ENCODE measurements at regions of chr15 and their contacts with region 1.

Region 1: DNA sequence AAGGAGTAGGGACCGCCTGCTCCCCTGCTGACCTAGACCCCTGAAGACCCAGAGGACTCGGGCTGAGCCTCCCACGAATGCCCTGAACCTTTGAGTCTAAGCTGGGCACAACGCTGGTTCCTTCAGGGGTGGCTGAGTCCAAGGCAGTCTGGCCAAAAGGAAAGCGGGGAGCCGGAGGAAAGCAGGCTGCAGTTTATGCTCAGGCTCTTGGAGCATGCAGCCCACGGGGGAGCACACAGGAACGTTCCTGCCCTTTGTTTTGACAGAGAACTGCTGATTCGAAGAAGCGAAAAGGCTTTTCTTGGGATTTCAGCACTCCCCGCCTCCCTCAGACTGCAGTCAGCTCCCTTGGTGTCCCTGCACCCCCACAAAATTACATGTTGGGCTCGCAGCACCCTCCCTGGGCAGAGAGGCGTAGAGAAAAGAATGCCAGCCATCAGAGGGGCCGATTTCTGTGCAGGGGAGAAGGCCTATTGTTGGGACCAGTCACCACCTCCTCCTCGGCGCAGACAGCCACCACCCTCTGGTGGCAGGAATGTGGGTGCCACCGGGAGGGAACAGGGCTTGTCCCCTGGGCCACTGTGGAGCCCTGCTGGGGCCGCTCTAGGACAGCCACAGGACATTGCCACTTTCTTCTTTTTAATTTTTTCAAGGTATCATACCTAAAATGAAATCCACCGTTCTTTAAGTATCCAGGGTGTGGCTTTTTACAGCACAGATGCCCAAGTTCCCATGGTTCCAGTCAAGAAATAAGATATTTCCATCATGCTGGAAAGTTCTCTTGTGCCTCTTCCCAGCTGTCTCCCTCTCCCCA is 72.2 kb downstream of the SMAD6 start:
- DNase-seq: peak; percentile 24 to 66 (median 38)
- ATAC-seq: peak; percentile 59
- H3K4me3 ChIP-seq: no peak overlapping the region
- H3K4me3 Mint-ChIP-seq: no peak overlapping the region
- H3K27ac ChIP-seq: no peak overlapping the region
- H3K27ac Mint-ChIP-seq: no peak overlapping the region
- H3K4me1 ChIP-seq: no peaks in the 10 kb centered on the region
- H3K4me1 Mint-ChIP-seq: no peaks in the 10 kb centered on the region
- H3K27me3 ChIP-seq: no peaks in the 10 kb centered on the region
- H3K27me3 Mint-ChIP-seq: no peaks in the 10 kb centered on the region
- CTCF ChIP-seq: peak; percentile 66

Region 2: GRCh38 chr15:66603301-66604179 is 170.7 kb before region 1 on chr15:
- CTCF ChIA-PET with region 1: no interaction called
- POLR2A ChIA-PET with region 1: no interaction called
- intact Hi-C with region 1: loop called in 1 of 2 experiments (anchors 1 kb)
- DNase-seq: peak; percentile 36 to 80 (median 53)
- ATAC-seq: peak; percentile 57
- H3K4me3 ChIP-seq: no peak overlapping the region
- H3K4me3 Mint-ChIP-seq: no peak overlapping the region
- H3K27ac ChIP-seq: no peak overlapping the region
- H3K27ac Mint-ChIP-seq: no peak overlapping the region
- H3K4me1 ChIP-seq: no peaks in the 10 kb centered on the region
- H3K4me1 Mint-ChIP-seq: peaks cover under 1% of the 10 kb centered on the region
- H3K27me3 ChIP-seq: no peaks in the 10 kb centered on the region
- H3K27me3 Mint-ChIP-seq: peaks cover 6% of the 10 kb centered on the region
- CTCF ChIP-seq: peak; percentile 86

Region 3: GRCh38 chr15:66619151-66619903 is 154.9 kb before region 1 on chr15:
- CTCF ChIA-PET with region 1: interaction called, 8 read pairs
- POLR2A ChIA-PET with region 1: no interaction called
- intact Hi-C with region 1: loop called (anchors 1 kb)
- DNase-seq: peak in 13 of 14 experiments; percentile 7 to 63 (median 24)
- ATAC-seq: peak; percentile 44
- H3K4me3 ChIP-seq: no peak overlapping the region
- H3K4me3 Mint-ChIP-seq: no peak overlapping the region
- H3K27ac ChIP-seq: no peak overlapping the region
- H3K27ac Mint-ChIP-seq: no peak overlapping the region
- H3K4me1 ChIP-seq: peaks cover 4% of the 10 kb centered on the region
- H3K4me1 Mint-ChIP-seq: peaks cover 5% of the 10 kb centered on the region
- H3K27me3 ChIP-seq: peaks cover 19 to 37% of the 10 kb centered on the region in 2 experiments
- H3K27me3 Mint-ChIP-seq: peaks cover 45% of the 10 kb centered on the region
- CTCF ChIP-seq: peak; percentile 69

Measured in CD4-positive, alpha-beta T cell (primary cell).